CD8-positive, alpha-beta T cell (primary cell): ENCODE measurements at regions of chr1 and their contacts with region 1.

Region 1: GRCh38 chr1:30707412-30708360 is 15.7 kb downstream of the MATN1 start:
- DNase-seq: peak in 7 of 9 experiments; percentile 25 to 74 (median 60)
- ATAC-seq: peak; percentile 89
- H3K4me3 ChIP-seq: no peak overlapping the region
- H3K4me3 Mint-ChIP-seq: no peak overlapping the region
- H3K27ac ChIP-seq: no peak overlapping the region
- H3K27ac Mint-ChIP-seq: no peak overlapping the region
- H3K4me1 ChIP-seq: no peaks in the 10 kb centered on the region
- H3K4me1 Mint-ChIP-seq: peaks cover 6% of the 10 kb centered on the region
- H3K27me3 ChIP-seq: no peaks in the 10 kb centered on the region
- H3K27me3 Mint-ChIP-seq: peaks cover 14% of the 10 kb centered on the region
- CTCF ChIP-seq: peak; percentile 51

Region 2: DNA sequence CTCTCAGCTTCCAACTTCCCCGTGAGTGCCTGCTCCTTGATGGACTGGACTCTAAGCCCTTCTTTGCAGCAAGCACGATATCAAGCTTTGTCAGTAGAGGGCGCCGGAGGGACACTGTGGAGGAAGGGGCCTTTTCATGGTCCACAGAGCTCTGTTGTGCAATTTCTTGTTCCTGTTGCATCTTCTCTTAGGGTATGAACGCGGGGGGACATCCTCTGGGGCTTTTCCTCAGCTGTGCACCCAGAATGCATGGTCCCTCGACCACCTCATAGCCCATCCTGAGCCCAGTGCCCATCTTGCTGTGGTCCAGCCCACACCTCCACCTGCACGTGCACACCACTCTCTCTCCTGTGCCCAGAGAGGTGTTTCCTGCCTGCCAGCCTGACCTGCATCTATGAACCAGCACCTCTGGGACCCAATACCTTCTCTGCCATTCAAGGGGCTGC is 914.6 kb before region 1 on chr1:
- CTCF ChIA-PET with region 1: no interaction called
- POLR2A ChIA-PET with region 1: no interaction called
- intact Hi-C with region 1: loop called in 1 of 2 experiments (anchors 5 kb)
- DNase-seq: peak in 7 of 9 experiments; percentile 14 to 54 (median 42)
- ATAC-seq: no peak
- H3K4me3 ChIP-seq: no peak overlapping the region
- H3K4me3 Mint-ChIP-seq: no peak overlapping the region
- H3K27ac ChIP-seq: no peak overlapping the region
- H3K27ac Mint-ChIP-seq: no peak overlapping the region
- H3K4me1 ChIP-seq: no peaks in the 10 kb centered on the region
- H3K4me1 Mint-ChIP-seq: no peaks in the 10 kb centered on the region
- H3K27me3 ChIP-seq: no peaks in the 10 kb centered on the region
- H3K27me3 Mint-ChIP-seq: peaks cover 2% of the 10 kb centered on the region
- CTCF ChIP-seq: no peak

Region 3: DNA sequence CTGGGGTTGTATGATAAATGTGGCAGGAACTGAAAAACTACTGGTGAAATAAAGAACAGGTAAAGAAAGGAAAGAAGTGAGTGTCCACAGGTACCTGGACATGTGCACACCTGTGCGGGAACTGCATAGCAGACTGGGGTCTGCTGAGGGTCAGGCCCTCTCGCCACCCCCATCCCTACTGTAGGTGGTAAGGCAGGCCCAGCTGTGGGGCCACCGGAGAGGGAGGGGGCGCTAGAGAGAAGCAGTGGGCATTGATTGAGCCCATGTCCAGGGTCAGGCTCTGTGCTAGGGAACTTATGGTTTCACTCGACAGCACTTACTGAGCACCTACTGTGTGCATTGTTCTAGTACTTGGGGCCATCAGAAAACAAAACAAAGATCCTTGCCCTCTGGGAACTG is 384.8 kb before region 1 on chr1:
- CTCF ChIA-PET with region 1: no interaction called
- POLR2A ChIA-PET with region 1: no interaction called
- intact Hi-C with region 1: no loop called
- DNase-seq: peak in 1 of 9 experiments; percentile 9
- ATAC-seq: no peak
- H3K4me3 ChIP-seq: no peak overlapping the region
- H3K4me3 Mint-ChIP-seq: no peak overlapping the region
- H3K27ac ChIP-seq: no peak overlapping the region
- H3K27ac Mint-ChIP-seq: no peak overlapping the region
- H3K4me1 ChIP-seq: no peaks in the 10 kb centered on the region
- H3K4me1 Mint-ChIP-seq: no peaks in the 10 kb centered on the region
- H3K27me3 ChIP-seq: no peaks in the 10 kb centered on the region
- H3K27me3 Mint-ChIP-seq: peaks cover 12% of the 10 kb centered on the region
- CTCF ChIP-seq: no peak